BJ (cell line): ENCODE measurements at regions of chr14 and their contacts with region 1.

Region 1: DNA sequence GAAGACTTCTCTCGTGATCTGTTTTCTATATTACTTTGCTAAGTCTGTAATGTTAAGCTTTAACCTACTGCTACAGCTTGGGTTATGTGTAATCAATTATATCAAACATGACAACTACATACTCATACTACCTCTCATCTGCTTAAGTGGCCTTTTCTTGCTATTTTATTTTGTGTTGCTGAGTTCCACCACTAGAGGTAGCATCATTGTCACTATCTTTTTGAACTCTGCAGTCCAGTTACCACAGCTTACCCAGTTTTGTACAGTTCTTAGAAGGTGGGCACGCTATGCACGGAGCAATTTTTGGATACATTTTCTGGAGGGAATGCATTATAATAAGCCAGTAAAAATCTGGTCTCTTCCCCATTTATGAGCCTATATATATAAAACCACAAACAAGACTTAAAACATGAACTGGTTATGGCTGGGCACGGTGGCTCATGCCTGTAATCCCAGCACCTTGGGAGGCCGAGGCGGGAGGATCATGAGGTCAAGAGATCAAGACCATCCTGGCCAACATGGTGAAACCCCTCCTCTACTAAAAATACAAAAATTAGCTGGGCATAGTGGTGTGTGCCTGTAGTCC is 48.5 kb downstream of the SAV1 start:
- DNase-seq: no peak
- H3K4me3 ChIP-seq: no peak overlapping the region
- H3K27me3 ChIP-seq: no peaks in the 10 kb centered on the region
- CTCF ChIP-seq: peak; percentile 78

Region 2: GRCh38 chr14:49121246-49121645 is 1498.4 kb before region 1 on chr14:
- CTCF ChIA-PET with region 1: no interaction called
- POLR2A ChIA-PET with region 1: no interaction called
- DNase-seq: no peak
- H3K4me3 ChIP-seq: no peak overlapping the region
- H3K27me3 ChIP-seq: no peaks in the 10 kb centered on the region
- CTCF ChIP-seq: no peak

Region 3: GRCh38 chr14:50578433-50578832 is 41.2 kb before region 1 on chr14:
- CTCF ChIA-PET with region 1: no interaction called
- POLR2A ChIA-PET with region 1: no interaction called
- DNase-seq: no peak
- H3K4me3 ChIP-seq: no peak overlapping the region
- H3K27me3 ChIP-seq: no peaks in the 10 kb centered on the region
- CTCF ChIP-seq: no peak

Region 4: GRCh38 chr14:50599700-50600444 is 19.8 kb before region 1 on chr14:
- CTCF ChIA-PET with region 1: interaction called, 18 read pairs
- POLR2A ChIA-PET with region 1: no interaction called
- DNase-seq: no peak
- H3K4me3 ChIP-seq: no peak overlapping the region
- H3K27me3 ChIP-seq: no peaks in the 10 kb centered on the region
- CTCF ChIP-seq: peak; percentile 63

Region 5: GRCh38 chr14:50607181-50607580 is 12.5 kb before region 1 on chr14:
- CTCF ChIA-PET with region 1: interaction called, 18 read pairs
- POLR2A ChIA-PET with region 1: interaction called, 3 read pairs
- DNase-seq: no peak
- H3K4me3 ChIP-seq: no peak overlapping the region
- H3K27me3 ChIP-seq: no peaks in the 10 kb centered on the region
- CTCF ChIP-seq: no peak

Region 6: DNA sequence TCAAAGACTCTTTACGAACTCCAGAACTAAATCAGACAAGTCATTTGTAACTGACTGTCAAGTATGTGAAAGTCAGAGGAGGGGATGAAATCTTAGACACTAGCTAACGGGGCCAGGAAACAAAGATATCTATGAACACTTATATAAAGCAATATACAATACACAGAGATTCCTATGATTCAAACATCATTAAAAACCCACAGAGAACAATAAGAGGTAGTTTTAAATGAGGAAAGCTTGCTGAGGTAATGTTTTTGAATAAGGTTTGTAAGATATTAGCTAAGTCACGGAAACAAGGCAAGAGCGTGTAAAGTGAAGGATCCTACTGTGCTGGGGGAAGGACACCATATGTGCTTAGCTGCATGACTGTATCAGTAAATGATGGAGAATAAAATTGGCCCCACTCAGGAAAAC is 11.8 kb after region 1 on chr14:
- CTCF ChIA-PET with region 1: interaction called, 16 read pairs
- POLR2A ChIA-PET with region 1: no interaction called
- DNase-seq: no peak
- H3K4me3 ChIP-seq: no peak overlapping the region
- H3K27me3 ChIP-seq: no peaks in the 10 kb centered on the region
- CTCF ChIP-seq: no peak